Heart right ventricle (tissue), 16 donors: ENCODE measurements at regions of chr3 and their contacts with region 1.

Region 1: GRCh38 chr3:127467391-127467790 is 123.1 kb downstream of the TPRA1 start:
- DNase-seq: no peak
- ATAC-seq: no peak
- H3K4me3 ChIP-seq: no peak overlapping the region
- H3K27ac ChIP-seq: no peak overlapping the region
- H3K4me1 ChIP-seq: no peaks in the 10 kb centered on the region
- H3K27me3 ChIP-seq: peaks cover 0 to 4% (median 0%) of the 10 kb centered on the region in 7 donors
- CTCF ChIP-seq: no peak

Region 2: GRCh38 chr3:127374086-127375010 is 93.0 kb before region 1 on chr3:
- intact Hi-C with region 1: loop called in 1 of 10 experiments (anchors 5 kb)
- DNase-seq: no peak
- ATAC-seq: peak in 1 of 8 donors; percentile 19
- H3K4me3 ChIP-seq: no peak overlapping the region
- H3K27ac ChIP-seq: no peak overlapping the region
- H3K4me1 ChIP-seq: no peaks in the 10 kb centered on the region
- H3K27me3 ChIP-seq: peaks cover 0 to 40% (median 24%) of the 10 kb centered on the region in 7 donors
- CTCF ChIP-seq: peak in 7 of 9 donors; percentile 11 to 41 (median 21)